ENCODE measurements at regions of chrX and their contacts with region 1.

Region 1: DNA sequence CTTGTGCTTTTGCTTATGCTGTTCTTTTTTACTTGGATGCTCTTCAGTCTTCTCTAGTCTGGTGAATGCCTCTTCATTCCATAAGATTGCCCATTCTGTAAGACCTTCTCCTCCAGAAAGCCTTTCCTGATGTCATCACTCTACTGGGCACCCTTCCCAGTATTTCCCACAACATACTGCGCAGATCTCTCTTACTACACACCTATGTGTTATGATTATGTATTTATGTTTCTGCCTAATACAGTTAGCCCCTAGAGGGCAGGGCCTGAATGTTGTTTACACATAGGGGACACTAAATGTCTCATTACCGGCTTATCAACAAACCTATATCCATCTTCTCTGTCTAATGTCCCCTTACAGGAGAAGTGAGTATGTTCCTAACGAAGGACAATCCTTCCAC is 21.1 kb downstream of the AIFM1 start:
- DNase-seq: no peak
- ATAC-seq: peak; percentile 34; the same call in 1 of the 3 replicates
- H3K4me3 ChIP-seq: no peak overlapping the region
- H3K27ac ChIP-seq: no peak overlapping the region
- H3K4me1 ChIP-seq: no peaks in the 10 kb centered on the region
- H3K27me3 ChIP-seq: no peaks in the 10 kb centered on the region
- CTCF ChIP-seq: peak in 1 of 3 experiments; percentile 22; a peak in 1 of 6 replicates
- EP300 ChIP-seq: no peak
- POLR2A ChIP-seq: no peak
- RAD21 ChIP-seq: 0 out of 2 replicates have a peak, but pooled peaks have one; percentile 18

Region 2: GRCh38 chrX:130186651-130187050 is 42.1 kb after region 1 on chrX:
- CTCF ChIA-PET with region 1: interaction called, 28 read pairs
- POLR2A ChIA-PET with region 1: no interaction called
- RAD21 ChIA-PET with region 1: interaction called, 7 read pairs
- SMC1A ChIA-PET with region 1: interaction called, 6 read pairs
- in situ Hi-C with region 1: no loop called
- intact Hi-C with region 1: loop called (anchors 5 kb)
- DNase-seq: no peak
- ATAC-seq: no peak
- H3K4me3 ChIP-seq: no peak overlapping the region
- H3K27ac ChIP-seq: no peak overlapping the region
- H3K4me1 ChIP-seq: peaks cover 7% of the 10 kb centered on the region
- H3K27me3 ChIP-seq: no peaks in the 10 kb centered on the region
- CTCF ChIP-seq: no peak
- EP300 ChIP-seq: no peak
- POLR2A ChIP-seq: no peak
- RAD21 ChIP-seq: no peak